Activated B cell treated with CpG ODN at 0.5 μM for 24 hours (primary cell): ENCODE measurements at regions of chr12 and their contacts with region 1.

Region 1: GRCh38 chr12:96249196-96250118 is 55.3 kb downstream of the ELK3 start:
- DNase-seq: no peak
- ATAC-seq: no peak
- H3K4me3 Mint-ChIP-seq: no peak overlapping the region
- H3K27ac Mint-ChIP-seq: peak overlapping the region; percentile 30
- H3K4me1 Mint-ChIP-seq: peaks cover 19% of the 10 kb centered on the region
- H3K27me3 Mint-ChIP-seq: no peaks in the 10 kb centered on the region
- CTCF ChIP-seq: no peak

Region 2: GRCh38 chr12:96294831-96295230 is 45.4 kb after region 1 on chr12:
- CTCF ChIA-PET with region 1: no interaction called
- POLR2A ChIA-PET with region 1: no interaction called
- intact Hi-C with region 1: loop called (anchors 5 kb)
- DNase-seq: no peak
- ATAC-seq: no peak
- H3K4me3 Mint-ChIP-seq: no peak overlapping the region
- H3K27ac Mint-ChIP-seq: no peak overlapping the region
- H3K4me1 Mint-ChIP-seq: peaks cover 2% of the 10 kb centered on the region
- H3K27me3 Mint-ChIP-seq: no peaks in the 10 kb centered on the region
- CTCF ChIP-seq: no peak